Activated T-helper 2 cell treated with anti-CD3 and anti-CD28 coated beads, Interferon-gamma antibody, Interleukin-2, Interleukin-4, amounts not matched to agents 10 μg/mL and 5 μg/mL and 100 μg/mL, durations not matched to agents 14 hours and 24 hours and 36 hours (primary cell): ENCODE measurements at regions of chr14 and their contacts with region 1.

Region 1: DNA sequence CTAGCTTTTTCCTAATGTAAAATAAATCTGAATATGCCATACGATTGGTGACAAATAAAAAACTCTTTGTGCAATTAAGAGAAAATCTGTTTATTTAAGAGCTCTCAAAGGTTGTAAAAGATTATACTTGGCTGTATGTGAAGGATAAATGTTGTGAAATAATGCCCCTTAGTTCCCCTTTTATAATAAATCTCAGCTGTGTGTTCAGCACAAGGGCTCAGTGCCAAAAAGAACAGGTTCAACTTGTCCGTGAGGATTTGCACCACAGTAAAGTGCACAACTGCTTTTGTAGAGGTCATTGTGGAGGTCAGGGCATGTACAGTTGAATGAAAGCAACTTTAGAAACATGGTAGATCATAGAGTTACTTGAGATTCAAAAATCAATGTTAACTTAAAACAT is 118.6 kb downstream of the TRMT5 start:
- DNase-seq: no peak
- H3K4me3 Mint-ChIP-seq: no peak overlapping the region
- H3K27ac Mint-ChIP-seq: no peak overlapping the region
- H3K4me1 Mint-ChIP-seq: peaks cover 7% of the 10 kb centered on the region
- H3K27me3 Mint-ChIP-seq: peaks cover 8% of the 10 kb centered on the region

Region 2: DNA sequence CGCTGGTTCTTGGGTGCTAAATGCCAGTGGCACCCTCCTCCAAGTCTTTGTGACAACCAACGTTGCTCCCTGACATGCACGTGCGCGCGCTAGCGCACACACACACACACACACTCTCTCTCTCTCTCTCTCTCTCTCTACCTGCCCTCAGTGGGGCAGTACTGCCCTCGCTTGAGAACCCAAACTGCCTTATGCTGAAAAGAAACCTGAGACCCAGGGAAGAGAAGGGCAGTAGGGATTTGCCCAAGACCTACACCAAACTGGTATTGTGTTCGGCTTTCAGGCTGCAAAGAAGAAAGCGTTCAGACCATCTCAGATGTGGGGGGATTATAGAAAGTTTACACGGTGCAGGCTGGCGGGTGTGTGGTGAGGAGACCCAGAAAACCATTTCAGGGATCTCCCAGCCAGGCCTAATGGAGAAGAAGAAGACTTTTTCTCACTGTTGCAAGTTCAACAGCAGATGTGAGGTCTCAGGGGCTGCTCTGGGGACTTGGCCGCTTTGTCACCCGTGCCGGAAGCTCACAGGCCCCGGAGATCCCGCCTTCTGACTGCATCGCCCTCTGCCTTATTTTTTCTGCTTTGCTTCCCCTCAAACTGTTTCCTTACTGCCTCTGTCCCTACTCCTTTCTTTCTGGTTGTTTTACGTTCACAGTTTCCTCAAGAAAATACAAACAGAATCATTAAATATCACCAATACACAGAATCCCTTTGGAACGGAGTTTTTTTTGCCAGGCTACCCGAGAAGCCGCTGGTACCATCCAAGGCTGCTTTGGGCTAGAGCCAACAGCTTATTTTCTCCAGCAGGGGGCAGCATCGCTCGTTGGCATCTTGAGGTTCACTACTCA is 530.9 kb before region 1 on chr14:
- intact Hi-C with region 1: loop called (anchors 10 kb)
- DNase-seq: peak; percentile 61
- H3K4me3 Mint-ChIP-seq: peak overlapping the region; percentile 86
- H3K27ac Mint-ChIP-seq: peak overlapping the region; percentile 90
- H3K4me1 Mint-ChIP-seq: peaks cover 34% of the 10 kb centered on the region
- H3K27me3 Mint-ChIP-seq: peaks cover 46% of the 10 kb centered on the region

Region 3: DNA sequence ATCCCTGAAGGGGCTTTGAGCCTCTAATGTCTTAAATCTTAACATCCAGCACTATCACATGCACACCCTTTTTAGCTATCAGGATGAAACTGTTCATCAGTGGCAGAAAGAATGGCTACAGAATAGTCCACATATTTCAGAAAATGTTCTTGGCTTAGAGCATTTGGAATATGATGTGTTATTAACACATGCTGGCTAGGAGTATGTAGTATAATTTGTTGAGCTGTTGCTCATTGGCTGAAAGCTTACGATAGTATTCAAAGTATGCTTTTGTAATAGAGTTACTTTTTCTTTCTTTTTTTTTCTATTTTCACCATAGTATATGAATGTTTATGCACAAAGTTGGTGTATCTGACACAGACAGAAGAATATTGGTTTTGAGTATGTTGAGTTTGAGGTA is 72.6 kb before region 1 on chr14:
- intact Hi-C with region 1: loop called (anchors 10 kb)
- DNase-seq: no peak
- H3K4me3 Mint-ChIP-seq: no peak overlapping the region
- H3K27ac Mint-ChIP-seq: no peak overlapping the region
- H3K4me1 Mint-ChIP-seq: peaks cover 14% of the 10 kb centered on the region
- H3K27me3 Mint-ChIP-seq: no peaks in the 10 kb centered on the region

Region 4: DNA sequence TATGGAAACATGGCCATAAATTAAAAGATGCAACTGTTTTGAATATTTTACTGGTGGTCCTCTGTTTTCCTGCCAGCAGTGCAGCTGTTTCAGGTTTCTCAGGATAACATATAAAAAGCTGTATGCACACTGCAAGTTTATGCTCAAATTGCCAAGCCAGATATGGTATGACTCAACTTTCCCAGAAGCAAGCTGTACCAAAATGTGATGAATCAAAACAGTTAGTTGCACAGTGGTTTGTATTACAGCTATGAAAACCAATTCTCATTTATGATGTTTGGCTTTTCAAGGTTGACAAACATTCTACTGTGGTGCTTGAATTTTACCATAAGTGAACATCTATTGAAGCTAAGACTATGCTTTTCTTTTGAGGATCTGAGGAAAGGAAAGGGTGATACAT is 103.1 kb after region 1 on chr14:
- intact Hi-C with region 1: loop called (anchors 5 kb)
- DNase-seq: no peak
- H3K4me3 Mint-ChIP-seq: no peak overlapping the region
- H3K27ac Mint-ChIP-seq: peak overlapping the region; percentile 55
- H3K4me1 Mint-ChIP-seq: peaks cover 11% of the 10 kb centered on the region
- H3K27me3 Mint-ChIP-seq: no peaks in the 10 kb centered on the region

Region 5: GRCh38 chr14:61147831-61148549 is 285.7 kb after region 1 on chr14:
- intact Hi-C with region 1: no loop called
- DNase-seq: no peak
- H3K4me3 Mint-ChIP-seq: no peak overlapping the region
- H3K27ac Mint-ChIP-seq: no peak overlapping the region
- H3K4me1 Mint-ChIP-seq: peaks cover 2% of the 10 kb centered on the region
- H3K27me3 Mint-ChIP-seq: no peaks in the 10 kb centered on the region